ENCODE measurements at regions of chr4 and their contacts with region 1.

Region 1: DNA sequence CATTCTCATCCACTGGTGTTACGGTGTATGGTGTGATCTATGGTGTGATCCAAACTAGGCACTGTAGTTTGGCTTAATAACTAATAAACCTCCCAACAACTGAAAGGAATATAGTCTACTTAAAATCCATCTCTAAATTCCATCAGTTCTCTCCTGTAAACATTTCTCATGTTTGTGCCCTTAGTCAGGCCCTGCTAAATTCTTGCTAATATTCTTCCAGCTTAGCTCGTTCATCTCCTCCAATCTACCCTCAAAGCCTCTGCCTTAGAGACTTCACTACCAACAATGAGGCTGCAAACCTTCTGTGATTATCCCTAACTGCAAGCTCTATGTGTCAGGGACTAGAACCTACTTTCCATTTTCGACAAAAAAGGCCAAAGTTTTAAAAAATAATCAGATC is 28.1 kb downstream of the ZAR1 start:
- DNase-seq: no peak
- ATAC-seq: no peak
- H3K4me3 ChIP-seq: no peak overlapping the region
- H3K27ac ChIP-seq: no peak overlapping the region
- H3K4me1 ChIP-seq: no peaks in the 10 kb centered on the region
- H3K27me3 ChIP-seq: no peaks in the 10 kb centered on the region
- CTCF ChIP-seq: no peak

Region 2: GRCh38 chr4:48450740-48451139 is 67.4 kb before region 1 on chr4:
- intact Hi-C with region 1: no loop called
- DNase-seq: no peak
- ATAC-seq: no peak
- H3K4me3 ChIP-seq: no peak overlapping the region
- H3K27ac ChIP-seq: no peak overlapping the region
- H3K4me1 ChIP-seq: no peaks in the 10 kb centered on the region
- H3K27me3 ChIP-seq: no peaks in the 10 kb centered on the region
- CTCF ChIP-seq: no peak

Region 3: DNA sequence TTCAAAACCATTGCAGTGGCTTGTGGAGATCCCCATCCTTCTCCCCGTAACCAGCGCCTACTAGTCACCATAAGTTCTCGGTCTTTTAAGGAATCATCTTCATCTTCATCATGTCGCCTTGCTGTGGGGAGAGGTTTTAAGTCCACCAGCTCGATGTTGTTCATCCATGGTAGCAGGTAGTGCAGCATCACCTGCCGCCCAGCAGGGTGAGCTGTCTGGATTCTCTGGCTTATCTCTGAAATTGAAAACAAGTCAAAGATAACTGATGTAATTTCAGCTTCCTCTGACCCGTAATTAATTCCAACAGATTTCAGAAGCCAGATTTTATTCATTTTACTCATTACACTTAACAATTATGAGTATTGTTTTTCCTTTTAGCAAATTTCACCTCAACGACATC is 39.3 kb after region 1 on chr4:
- intact Hi-C with region 1: loop called in 1 of 10 experiments (anchors 5 kb)
- DNase-seq: no peak
- ATAC-seq: no peak
- H3K4me3 ChIP-seq: no peak overlapping the region
- H3K27ac ChIP-seq: no peak overlapping the region
- H3K4me1 ChIP-seq: no peaks in the 10 kb centered on the region
- H3K27me3 ChIP-seq: no peaks in the 10 kb centered on the region
- CTCF ChIP-seq: peak in 3 of 9 donors; percentile 8 to 20 (median 11)

Measured in heart right ventricle (tissue), 16 donors.